Uterus (tissue), 4 donors: ENCODE measurements at regions of chr9 and their contacts with region 1.

Region 1: GRCh38 chr9:126781186-126782052 is 23.4 kb upstream of the ZBTB43 start:
- DNase-seq: peak; percentile 65 to 77
- H3K4me3 ChIP-seq: no peak overlapping the region
- H3K27ac ChIP-seq: no peak overlapping the region
- H3K4me1 ChIP-seq: no peaks in the 10 kb centered on the region
- H3K27me3 ChIP-seq: no peaks in the 10 kb centered on the region
- CTCF ChIP-seq: peak; percentile 82 to 92 (median 84)
- POLR2A ChIP-seq: no peak

Region 2: GRCh38 chr9:126704873-126705766 is 76.3 kb before region 1 on chr9:
- intact Hi-C with region 1: loop called (anchors 5 kb)
- DNase-seq: peak; percentile 69 to 78
- H3K4me3 ChIP-seq: peak overlapping the region in 1 of 2 donors; percentile 12
- H3K27ac ChIP-seq: no peak overlapping the region
- H3K4me1 ChIP-seq: peaks cover 0 to 6% of the 10 kb centered on the region in 2 donors
- H3K27me3 ChIP-seq: no peaks in the 10 kb centered on the region
- CTCF ChIP-seq: peak; percentile 84 to 93 (median 88)
- POLR2A ChIP-seq: no peak